IMR-90 (cell line): ENCODE measurements at regions of chr19 and their contacts with region 1.

Region 1: GRCh38 chr19:7722231-7722651 is 9.7 kb downstream of the CLEC4G start:
- DNase-seq: no peak
- ATAC-seq: no peak
- H3K4me3 ChIP-seq: no peak overlapping the region
- H3K27ac ChIP-seq: no peak overlapping the region
- H3K4me1 ChIP-seq: no peaks in the 10 kb centered on the region
- H3K27me3 ChIP-seq: peaks cover 17% of the 10 kb centered on the region
- CTCF ChIP-seq: no peak
- POLR2A ChIP-seq: no peak
- RAD21 ChIP-seq: no peak

Region 2: DNA sequence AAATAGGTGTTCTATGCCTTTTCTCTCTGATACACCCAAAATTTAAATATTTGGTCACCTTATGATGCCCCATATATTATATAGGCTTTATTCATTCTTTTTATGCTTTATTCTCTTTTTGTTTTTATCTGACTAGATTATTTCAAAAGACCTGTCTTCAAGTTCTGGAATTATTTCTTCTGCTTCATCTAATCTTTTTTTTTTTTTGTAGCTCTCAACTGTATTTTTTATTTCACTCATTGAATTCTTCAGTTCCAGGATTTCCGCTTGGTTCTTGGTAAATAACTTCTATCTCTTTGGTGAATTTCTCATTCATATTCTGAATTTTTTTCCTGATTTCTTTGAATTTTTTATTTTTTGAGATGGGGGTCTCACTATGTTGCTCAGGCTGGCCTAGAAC is 36.9 kb after region 1 on chr19:
- CTCF ChIA-PET with region 1: no interaction called
- POLR2A ChIA-PET with region 1: no interaction called
- dilution Hi-C with region 1: no loop called
- in situ Hi-C with region 1: no loop called
- intact Hi-C with region 1: loop called (anchors 5 kb)
- DNase-seq: no peak
- ATAC-seq: no peak
- H3K4me3 ChIP-seq: no peak overlapping the region
- H3K27ac ChIP-seq: no peak overlapping the region
- H3K4me1 ChIP-seq: no peaks in the 10 kb centered on the region
- H3K27me3 ChIP-seq: no peaks in the 10 kb centered on the region; the same call in 1 of the 2 replicates
- CTCF ChIP-seq: no peak
- POLR2A ChIP-seq: no peak
- RAD21 ChIP-seq: no peak